Common myeloid progenitor, CD34-positive (primary cell): ENCODE measurements at regions of chr20 and their contacts with region 1.

Region 1: DNA sequence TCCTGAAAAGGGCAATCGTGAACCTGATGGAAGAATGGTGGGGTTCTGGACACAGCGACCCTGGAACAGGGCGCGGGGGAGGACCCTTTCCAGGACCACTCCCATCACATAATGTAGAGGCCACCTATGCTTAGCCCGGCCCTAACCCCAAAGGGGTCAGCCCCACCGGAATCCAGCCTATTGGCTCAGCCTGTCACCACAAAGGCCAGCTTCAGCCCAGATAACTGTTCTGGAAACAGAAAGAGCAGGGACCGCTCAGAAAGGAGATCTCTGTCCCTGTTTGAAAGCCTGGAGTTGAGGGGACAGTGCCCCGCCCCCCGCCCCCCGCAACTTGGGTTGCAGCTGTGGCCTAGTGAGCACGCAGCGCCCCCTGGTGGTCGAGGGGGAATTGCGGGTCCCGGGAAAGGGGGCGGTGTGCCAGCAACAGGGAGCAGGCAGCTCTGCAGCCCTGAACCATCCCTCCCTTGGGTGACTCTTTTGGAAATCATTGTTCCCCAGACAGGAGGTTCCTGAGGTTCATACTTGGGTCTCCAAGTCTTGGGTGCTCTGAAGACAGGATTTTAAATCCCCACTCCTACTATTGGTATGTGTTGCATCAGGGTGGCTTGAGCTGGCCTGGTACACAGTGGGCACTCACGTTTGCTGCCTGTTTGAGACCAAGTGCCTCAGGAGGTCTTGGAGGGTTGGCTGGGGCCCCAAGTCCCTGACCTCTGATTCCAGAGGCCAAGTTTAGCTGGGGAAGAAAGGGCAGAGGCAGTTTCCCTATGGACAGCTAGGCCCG is 1.5 kb downstream of the SIGLEC1 start:
- DNase-seq: peak; percentile 70 to 81 (median 79)
- H3K4me3 ChIP-seq: no peak overlapping the region
- H3K27ac ChIP-seq: no peak overlapping the region
- H3K4me1 ChIP-seq: peaks cover 0 to 17% (median 5%) of the 10 kb centered on the region in 4 experiments
- H3K27me3 ChIP-seq: peaks cover 0 to 2% (median 0%) of the 10 kb centered on the region in 5 experiments

Region 2: GRCh38 chr20:3696200-3696599 is 14.7 kb before region 1 on chr20:
- CTCF ChIA-PET with region 1: interaction called, 17 read pairs
- POLR2A ChIA-PET with region 1: no interaction called
- DNase-seq: peak in 1 of 3 donors; percentile 15
- H3K4me3 ChIP-seq: no peak overlapping the region
- H3K27ac ChIP-seq: no peak overlapping the region
- H3K4me1 ChIP-seq: no peaks in the 10 kb centered on the region
- H3K27me3 ChIP-seq: peaks cover 0 to 4% (median 0%) of the 10 kb centered on the region in 5 experiments